GM18951 (cell line): ENCODE measurements at regions of chr12 and their contacts with region 1.

Region 1: DNA sequence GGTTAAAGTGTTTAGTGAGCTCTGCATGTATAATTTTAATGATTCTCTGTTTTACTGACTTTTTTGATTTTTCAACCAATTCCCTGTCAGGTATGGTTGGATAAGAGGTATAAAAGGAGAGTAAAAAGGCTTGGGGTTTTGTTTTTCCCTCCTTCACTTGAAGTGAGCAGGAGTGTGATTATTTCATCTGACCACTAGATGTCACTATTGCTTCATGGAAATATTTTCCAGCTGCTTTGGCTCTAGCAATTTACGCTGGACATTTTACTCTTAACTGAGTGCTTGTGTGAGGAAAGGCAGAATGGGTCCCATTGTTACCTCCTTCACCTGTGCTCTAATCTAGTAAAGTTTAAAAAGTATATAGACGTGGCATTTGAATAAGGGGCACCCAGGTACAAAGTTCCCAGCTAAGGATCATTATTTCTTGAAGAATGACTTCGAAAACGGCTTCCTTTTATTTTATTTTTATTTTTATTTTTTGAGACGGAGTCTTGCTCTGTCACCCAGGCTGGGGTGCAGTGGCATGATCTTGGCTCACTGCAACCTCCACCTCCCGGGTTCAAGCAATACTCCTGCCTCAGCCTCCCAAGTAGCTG is 66.5 kb downstream of the TBC1D30 start:
- POLR2A ChIP-seq: no peak

Region 2: DNA sequence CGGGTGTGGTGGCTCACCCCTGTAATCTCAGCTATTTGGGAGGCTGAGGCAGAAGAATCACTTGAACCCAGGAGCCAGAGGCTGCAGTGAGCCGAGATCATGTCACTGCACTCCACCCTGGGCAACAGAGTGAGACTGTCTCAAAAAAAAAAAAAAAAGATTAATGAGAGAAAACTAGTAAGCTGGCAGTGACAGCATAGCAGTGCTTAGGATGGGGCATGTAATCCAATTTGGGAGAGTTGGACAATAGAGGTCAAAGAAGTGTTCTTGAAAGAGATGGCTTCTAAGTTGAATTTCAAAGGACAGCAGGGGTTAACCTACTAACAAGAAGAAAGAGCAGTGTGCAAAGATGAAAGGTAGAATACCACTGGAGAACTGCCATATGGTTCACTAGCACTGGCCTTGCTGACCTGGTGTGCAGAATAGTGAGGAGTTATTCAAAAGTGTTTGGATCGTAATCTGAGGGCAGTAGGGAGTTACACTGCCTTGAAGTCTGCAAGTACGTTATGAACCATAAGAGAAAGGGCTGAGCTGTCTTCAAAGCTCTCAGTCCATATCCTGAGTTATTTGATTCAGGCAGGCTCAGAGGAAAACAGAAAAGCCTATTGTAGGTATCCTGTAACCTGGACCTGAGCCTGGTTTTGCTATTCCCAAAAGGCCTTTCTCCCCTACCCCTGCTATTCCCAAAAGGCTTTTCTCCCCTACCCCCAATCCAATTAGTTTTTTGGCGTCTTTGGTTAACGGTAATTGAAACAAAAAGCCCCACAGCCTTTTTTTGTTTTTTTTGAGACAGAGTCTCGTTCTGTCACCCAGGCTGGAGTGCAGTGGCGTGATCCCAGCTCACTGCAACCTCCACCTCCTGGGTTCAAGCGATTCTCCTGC is 483.4 kb before region 1 on chr12:
- in situ Hi-C with region 1: no loop called
- POLR2A ChIP-seq: no peak

Region 3: GRCh38 chr12:65106948-65107347 is 216.0 kb after region 1 on chr12:
- in situ Hi-C with region 1: loop called (anchors 10 kb)
- POLR2A ChIP-seq: no peak

Region 4: GRCh38 chr12:65269603-65270002 is 378.6 kb after region 1 on chr12:
- in situ Hi-C with region 1: loop called (anchors 25 kb)
- POLR2A ChIP-seq: no peak

Region 5: DNA sequence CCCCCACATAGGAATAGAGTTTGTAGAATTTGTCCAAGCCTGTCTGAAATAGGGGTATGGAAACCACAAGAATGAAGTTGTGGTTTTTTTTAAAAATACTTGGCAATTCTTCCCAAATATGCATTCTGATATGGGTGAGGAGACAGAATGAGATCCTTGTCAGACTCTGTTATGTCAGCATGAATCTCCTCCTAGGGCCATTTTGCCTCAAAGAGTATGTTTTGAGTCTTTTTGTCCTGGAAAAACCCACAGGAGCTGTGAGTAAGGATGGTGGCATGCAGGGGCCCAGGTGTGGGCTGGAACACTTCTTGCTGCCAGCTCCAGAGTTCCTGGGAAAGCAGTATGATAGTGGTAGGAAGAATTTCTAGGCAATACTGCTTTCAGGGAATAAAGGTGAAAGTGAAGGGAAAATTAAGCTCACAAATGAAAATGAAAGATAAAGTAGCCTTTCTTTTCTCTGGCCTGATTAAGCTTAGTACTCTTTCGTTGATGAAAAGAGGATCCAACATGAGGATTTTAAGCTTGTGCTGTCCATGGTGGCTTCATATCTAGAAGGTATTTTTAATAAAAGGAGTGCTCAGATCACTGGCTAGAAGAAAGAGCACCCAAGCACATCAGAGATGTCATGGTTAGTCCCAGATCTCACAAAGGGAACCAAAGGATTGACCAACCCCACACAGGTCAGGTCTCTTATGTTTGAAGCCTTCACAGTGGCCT is 1108.8 kb after region 1 on chr12:
- in situ Hi-C with region 1: loop called (anchors 25 kb)
- POLR2A ChIP-seq: no peak

Region 6: DNA sequence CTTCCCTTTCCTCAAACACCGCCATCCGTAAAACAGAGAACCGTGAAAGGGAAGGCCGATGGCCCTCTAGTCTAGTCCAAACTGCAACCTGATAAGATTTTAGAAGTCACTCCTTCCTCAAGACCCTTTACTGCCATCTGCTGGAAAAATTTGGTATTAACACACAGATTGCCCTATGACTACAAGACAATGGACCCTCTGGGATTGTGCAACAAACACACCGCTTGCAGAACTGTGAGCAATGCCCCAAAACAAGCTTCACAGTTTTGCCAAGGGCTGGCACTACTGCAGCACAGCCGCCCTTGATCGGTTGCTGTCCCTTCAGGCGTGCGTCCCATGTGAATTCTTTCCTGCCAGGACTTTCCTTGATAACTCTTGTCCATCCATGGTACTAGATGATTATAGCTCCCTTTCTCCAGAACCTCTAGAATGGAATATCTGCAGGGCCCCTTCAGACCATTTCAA is 1216.5 kb after region 1 on chr12:
- in situ Hi-C with region 1: loop called (anchors 10 kb)
- POLR2A ChIP-seq: no peak